Motor neuron (in vitro differentiated cells): ENCODE measurements at regions of chr21 and their contacts with region 1.

Region 1: GRCh38 chr21:28516991-28517592 is 475.6 kb downstream of the LTN1 start:
- ATAC-seq: peak; percentile 69 to 99 (median 84)
- H3K4me3 ChIP-seq: no peak overlapping the region
- H3K27ac ChIP-seq: no peak overlapping the region
- H3K4me1 ChIP-seq: peaks cover 0 to under 1% of the 10 kb centered on the region in 2 donors

Region 2: DNA sequence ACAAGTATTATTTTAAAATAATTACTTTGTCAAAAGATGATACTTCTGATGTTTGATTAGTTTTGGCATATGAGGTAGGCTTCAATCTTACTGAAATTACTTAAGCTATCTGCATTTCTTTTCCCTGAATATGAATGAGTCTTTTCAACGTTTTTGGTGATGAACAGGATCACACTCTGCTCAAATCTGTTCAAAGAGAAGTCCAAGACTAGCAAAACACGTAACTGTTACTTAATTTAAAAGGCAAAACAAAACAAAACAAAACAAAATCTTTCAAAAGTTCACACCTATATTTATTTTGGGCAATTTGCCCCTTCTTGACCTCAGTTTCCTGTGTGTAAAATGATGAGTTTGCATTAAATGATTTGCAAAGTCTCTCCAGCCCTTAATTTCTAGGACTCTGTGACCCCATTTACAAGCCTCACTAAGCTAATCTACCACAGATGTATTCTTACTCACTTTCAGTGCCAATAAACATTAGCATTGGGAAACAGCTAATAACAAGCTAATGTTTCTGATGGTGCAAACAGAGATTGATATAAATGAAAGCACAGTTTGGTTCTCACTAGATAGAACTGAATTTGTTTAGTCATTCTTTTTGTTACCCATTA is 389.8 kb before region 1 on chr21:
- in situ Hi-C with region 1: no loop called
- ATAC-seq: peak in 2 of 8 experiments; percentile 17 to 52
- H3K4me3 ChIP-seq: no peak overlapping the region
- H3K27ac ChIP-seq: no peak overlapping the region
- H3K4me1 ChIP-seq: no peaks in the 10 kb centered on the region

Region 3: DNA sequence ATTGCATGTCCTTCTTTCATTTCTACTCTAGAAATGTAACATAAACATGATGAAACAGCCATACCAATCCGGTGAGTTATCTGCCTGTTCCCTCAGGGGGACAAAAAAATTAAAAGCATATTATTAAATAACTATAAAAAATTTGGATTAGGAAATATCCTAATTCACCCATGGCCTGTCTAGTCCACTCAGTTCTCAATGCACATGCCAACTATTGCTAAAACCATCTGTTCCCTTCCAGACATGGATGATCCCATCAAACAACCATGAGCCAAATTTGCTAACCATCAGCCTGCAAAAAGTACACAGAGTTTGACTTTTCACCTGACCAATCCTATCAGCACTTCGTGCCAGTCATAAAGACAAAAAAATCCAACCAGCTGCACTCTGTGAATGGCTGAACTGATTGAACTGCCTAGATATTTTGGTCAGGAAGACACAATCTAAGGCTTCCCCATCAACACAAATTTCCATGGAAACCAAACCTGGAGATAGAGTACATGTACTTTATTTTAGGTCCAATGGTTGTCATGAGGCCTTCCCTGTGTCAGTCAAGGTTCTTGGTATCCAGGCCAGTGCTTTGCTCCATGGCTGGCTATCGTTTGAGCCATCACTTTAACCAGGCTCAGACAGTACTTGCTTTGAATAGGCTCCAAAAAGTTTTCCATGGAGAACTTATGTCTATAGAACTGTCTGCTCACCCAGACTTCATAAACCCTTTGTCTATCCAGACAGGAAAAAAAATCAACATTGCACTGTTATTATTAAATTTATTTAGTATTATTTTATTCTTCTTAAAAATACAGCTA is 95.2 kb before region 1 on chr21:
- in situ Hi-C with region 1: loop called in 1 of 9 experiments (anchors 25 kb)
- ATAC-seq: peak in 1 of 8 experiments; percentile 18
- H3K4me3 ChIP-seq: no peak overlapping the region
- H3K27ac ChIP-seq: no peak overlapping the region
- H3K4me1 ChIP-seq: no peaks in the 10 kb centered on the region

Region 4: DNA sequence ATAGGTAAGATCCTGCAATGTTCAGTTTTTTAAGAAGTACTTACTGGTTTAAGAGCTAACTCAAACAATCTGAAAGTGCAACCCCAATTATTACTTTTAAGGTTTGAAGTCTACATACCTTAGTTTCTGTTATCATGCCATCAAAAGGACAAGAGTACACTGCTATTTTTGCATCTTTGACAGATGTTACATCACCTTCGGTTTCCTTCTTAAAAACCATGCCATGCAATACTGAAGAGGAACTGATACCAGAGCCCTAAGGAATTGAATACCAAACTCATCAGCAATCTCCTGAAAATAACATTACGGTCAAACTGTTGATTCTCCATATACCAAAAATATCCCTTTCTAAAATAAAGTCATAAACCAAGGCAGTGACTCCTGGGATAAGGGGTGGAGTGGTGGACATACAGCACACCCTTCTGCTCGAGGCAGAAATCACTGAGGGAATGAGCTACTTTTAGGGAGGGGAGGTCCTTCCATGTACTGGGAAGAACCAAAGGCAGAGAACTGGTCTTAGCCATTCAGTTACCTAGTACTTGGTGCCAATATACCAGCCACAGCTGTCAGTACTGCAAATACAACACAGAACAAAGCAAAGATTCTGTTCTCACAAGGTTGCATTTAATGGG is 547.9 kb after region 1 on chr21:
- in situ Hi-C with region 1: no loop called
- ATAC-seq: peak in 1 of 8 experiments; percentile 30
- H3K4me3 ChIP-seq: no peak overlapping the region
- H3K27ac ChIP-seq: no peak overlapping the region
- H3K4me1 ChIP-seq: no peaks in the 10 kb centered on the region